ENCODE measurements at regions of chr6 and their contacts with region 1.

Region 1: GRCh38 chr6:27893059-27893835 is 18.9 kb downstream of the OR2B2 start:
- DNase-seq: peak; percentile 94
- H3K4me3 ChIP-seq: peak overlapping the region; percentile 95
- CTCF ChIP-seq: no peak

Region 2: DNA sequence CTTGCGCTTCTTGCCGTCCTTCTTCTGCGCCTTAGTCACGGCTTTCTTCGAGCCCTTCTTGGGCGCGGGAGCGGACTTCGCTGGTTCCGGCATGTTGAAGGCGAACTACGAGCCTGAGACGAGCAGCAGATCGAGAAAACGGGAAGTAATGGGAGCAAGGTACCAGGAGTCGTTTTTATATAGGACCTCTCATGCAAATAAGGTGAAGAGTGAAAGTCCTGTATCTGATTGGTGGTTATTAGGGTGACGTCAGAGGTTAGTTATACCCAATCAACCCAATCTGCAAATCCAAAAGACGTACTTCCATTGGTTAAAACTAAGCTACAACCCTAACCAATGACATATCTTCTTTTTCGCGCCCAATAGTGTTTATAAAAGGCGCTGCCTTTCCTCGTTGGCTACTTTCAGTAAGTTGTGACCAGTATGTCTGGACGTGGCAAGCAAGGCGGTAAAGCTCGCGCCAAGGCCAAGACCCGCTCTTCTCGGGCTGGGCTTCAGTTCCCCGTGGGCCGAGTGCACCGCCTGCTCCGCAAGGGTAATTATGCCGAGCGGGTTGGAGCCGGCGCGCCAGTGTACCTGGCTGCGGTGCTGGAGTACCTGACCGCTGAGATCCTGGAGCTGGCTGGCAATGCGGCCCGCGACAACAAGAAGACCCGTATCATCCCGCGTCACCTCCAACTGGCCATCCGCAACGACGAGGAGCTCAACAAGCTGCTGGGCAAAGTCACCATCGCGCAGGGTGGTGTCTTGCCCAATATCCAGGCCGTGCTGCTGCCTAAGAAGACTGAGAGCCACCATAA is 746.3 kb before region 1 on chr6:
- CTCF ChIA-PET with region 1: interaction called, 3 read pairs
- POLR2A ChIA-PET with region 1: interaction called, 38 read pairs
- DNase-seq: peak; percentile 100
- H3K4me3 ChIP-seq: peak overlapping the region; percentile 88
- CTCF ChIP-seq: no peak

Region 3: GRCh38 chr6:27518881-27519795 is 374.1 kb before region 1 on chr6:
- CTCF ChIA-PET with region 1: interaction called, 14 read pairs
- POLR2A ChIA-PET with region 1: no interaction called
- DNase-seq: peak; percentile 63
- H3K4me3 ChIP-seq: peak overlapping the region; percentile 78
- CTCF ChIP-seq: peak; percentile 76

Region 4: DNA sequence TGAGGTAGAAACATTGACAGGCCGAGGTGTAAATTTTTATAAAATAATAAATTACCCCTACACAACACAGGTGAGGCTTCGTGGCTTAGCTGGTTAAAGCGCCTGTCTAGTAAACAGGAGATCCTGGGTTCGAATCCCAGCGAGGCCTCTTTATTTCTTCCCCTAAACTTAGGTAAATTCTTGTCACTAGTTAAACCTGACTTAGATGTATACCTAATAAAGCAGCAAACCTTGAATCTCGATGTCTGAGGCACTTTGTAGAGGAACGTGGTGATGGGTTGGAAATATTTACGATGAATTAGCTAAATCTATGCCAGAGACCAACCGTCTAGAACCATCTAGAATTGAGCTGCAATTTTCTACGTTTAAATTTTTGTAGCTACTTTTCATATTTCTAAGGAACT is 166.6 kb before region 1 on chr6:
- CTCF ChIA-PET with region 1: no interaction called
- POLR2A ChIA-PET with region 1: no interaction called
- DNase-seq: no peak
- H3K4me3 ChIP-seq: no peak overlapping the region
- CTCF ChIP-seq: no peak

Region 5: GRCh38 chr6:27809939-27810767 is 83.1 kb before region 1 on chr6:
- CTCF ChIA-PET with region 1: interaction called, 96 read pairs
- POLR2A ChIA-PET with region 1: interaction called, 107 read pairs
- DNase-seq: peak; percentile 91
- H3K4me3 ChIP-seq: peak overlapping the region; percentile 85
- CTCF ChIP-seq: peak; percentile 29

Region 6: DNA sequence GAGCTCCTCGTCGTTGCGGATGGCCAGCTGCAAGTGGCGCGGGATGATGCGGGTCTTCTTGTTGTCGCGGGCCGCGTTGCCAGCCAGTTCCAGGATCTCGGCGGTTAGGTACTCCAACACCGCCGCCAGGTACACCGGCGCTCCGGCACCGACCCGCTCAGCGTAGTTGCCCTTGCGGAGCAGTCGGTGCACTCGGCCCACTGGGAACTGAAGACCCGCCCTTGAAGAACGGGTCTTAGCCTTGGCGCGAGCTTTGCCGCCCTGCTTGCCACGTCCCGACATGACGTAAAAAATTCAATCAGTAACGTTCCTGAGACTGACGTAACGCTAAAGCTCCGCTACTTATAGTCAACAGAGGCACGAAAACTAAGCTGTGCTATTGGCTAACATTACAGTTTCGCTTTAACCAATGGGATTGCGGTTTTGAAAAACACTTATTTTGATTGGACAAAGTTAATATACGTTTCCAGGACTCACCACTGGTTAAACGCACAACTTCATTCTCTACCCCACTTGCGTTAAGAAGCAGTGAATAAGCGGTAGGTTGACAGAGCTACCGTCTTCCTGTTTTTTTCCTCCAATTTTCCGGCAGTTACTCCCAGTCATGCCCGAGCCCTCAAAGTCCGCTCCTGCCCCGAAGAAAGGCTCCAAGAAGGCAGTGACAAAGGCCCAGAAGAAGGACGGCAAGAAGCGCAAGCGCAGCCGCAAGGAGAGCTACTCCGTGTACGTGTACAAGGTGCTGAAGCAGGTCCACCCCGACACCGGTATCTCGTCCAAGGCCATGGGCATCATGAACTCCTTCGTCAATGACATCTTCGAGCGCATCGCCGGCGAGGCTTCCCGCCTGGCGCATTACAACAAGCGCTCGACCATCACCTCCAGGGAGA is 54.9 kb before region 1 on chr6:
- CTCF ChIA-PET with region 1: interaction called, 58 read pairs
- POLR2A ChIA-PET with region 1: interaction called, 73 read pairs
- DNase-seq: peak; percentile 98
- H3K4me3 ChIP-seq: peak overlapping the region; percentile 77
- CTCF ChIP-seq: no peak

Region 7: GRCh38 chr6:27871924-27872638 is 21.2 kb before region 1 on chr6:
- CTCF ChIA-PET with region 1: interaction called, 27 read pairs
- POLR2A ChIA-PET with region 1: interaction called, 96 read pairs
- DNase-seq: peak; percentile 88
- H3K4me3 ChIP-seq: peak overlapping the region; percentile 66
- CTCF ChIP-seq: peak; percentile 36

Region 8: DNA sequence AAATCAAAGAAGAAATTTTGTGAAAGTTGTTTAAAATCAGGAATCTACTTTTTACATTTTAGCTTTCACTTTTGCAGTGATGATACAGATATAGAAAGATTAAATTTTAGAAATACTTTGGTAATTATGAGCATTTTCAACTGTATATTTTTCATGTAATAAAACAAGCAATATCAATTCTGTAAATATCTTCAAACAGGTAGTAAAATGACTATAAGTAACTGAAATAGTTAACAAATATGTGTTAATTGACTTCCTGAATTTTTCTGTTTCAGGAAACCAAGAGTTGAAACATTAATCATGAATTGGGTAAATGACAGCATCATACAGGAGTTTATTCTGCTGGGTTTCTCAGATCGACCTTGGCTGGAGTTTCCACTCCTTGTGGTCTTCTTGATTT is 63.7 kb after region 1 on chr6 and contains the start of gene OR2B6:
- CTCF ChIA-PET with region 1: no interaction called
- POLR2A ChIA-PET with region 1: no interaction called
- DNase-seq: no peak
- H3K4me3 ChIP-seq: no peak within 1 kb of the TSS
- CTCF ChIP-seq: no peak